ENCODE measurements at regions of chr9 and their contacts with region 1.

Region 1: DNA sequence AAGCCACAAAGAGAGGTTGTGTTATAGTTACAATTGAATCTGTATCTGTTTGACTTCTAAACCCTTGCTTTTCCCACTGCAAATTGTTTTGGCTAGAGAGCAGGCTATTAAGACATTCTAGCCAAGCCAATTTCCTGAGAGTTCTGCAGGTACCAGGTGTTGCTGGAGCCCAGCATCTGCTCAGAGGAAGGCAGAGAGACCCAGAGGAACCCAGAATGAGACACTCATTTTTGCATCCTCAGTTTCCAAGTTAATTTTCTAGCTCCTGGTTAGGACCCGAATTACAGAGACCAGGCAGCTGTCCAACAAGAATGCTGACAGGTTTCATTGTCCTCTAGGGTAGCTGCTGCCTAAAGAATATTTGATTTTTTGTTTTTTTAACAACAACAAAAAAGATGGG is 266.2 kb downstream of the TRIM32 start:
- DNase-seq: no peak
- ATAC-seq: no peak

Region 2: GRCh38 chr9:116806075-116806474 is 147.2 kb before region 1 on chr9:
- intact Hi-C with region 1: no loop called
- DNase-seq: no peak
- ATAC-seq: no peak

Region 3: GRCh38 chr9:116987721-116988485 is 34.6 kb after region 1 on chr9:
- intact Hi-C with region 1: loop called (anchors 1 kb)
- DNase-seq: no peak
- ATAC-seq: no peak

Measured in sciatic nerve (tissue), 2 donors.